AG04450 (cell line): ENCODE measurements at regions of chr1 and their contacts with region 1.

Region 1: DNA sequence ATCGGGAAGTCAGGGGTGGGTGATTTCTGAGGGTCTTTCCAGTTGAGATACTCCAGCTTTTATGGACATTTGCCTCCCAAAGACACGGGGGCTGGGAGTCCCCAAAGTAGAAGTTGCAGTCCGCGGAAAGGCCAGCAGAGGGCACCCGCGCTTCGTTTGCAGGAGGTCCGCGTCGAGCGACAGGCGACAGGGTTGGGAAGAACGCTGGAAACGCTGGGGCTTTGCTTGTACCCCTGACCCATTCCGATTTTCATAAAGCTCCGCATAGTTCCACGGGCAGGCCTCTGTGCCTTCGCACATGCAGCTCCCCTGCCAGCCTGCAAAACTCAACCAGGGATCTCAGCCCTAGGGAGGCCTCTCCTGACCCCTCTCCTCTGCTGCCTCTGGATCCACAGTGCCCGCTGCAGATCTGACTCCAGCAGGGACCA is 44.2 kb upstream of the LAPTM5 start:
- DNase-seq: no peak
- H3K4me3 ChIP-seq: no peak overlapping the region
- H3K27ac ChIP-seq: no peak overlapping the region
- H3K27me3 ChIP-seq: no peaks in the 10 kb centered on the region
- CTCF ChIP-seq: peak; percentile 97

Region 2: GRCh38 chr1:30779294-30780071 is 22.3 kb before region 1 on chr1:
- CTCF ChIA-PET with region 1: interaction called, 57 read pairs
- POLR2A ChIA-PET with region 1: no interaction called
- DNase-seq: no peak
- H3K4me3 ChIP-seq: no peak overlapping the region
- H3K27ac ChIP-seq: no peak overlapping the region
- H3K27me3 ChIP-seq: peaks cover 3% of the 10 kb centered on the region
- CTCF ChIP-seq: peak; percentile 89

Region 3: DNA sequence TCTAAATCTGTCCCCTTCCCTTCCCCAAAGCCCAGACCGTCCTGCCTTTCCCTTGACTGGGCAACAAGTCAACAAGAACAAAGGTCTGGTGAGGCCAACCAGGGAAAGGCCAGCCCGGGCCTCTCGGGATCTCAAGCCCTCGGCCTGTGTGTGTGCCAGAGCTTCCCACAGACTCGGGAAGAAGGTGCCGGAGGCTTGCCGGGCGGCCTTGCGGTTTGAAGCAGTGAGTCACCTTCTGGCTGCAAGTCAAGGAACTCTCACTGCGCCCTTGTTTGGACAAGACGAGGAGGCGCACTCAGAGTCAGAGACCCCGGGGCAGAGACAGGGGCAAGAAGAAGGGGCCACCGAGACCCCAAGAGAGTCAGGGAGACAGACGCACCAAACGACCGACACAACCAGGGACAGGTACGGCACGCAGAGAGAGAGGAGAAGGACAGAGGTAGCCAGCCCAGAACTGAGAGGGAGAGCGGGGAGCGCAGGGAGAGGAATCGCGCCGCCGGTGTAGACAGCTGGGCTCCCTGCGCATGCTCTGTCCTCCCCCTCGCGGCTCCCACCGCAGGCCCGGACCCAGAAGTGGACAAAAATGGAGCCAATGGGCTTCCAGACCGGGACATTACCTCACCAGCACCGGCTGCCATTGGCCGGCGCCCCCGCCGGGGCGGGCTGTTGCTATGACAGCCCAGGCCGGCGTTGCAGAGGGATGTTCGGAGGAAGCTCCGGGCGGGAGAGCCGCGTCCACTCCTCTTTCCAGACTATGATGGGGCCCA is 22.4 kb after region 1 on chr1:
- CTCF ChIA-PET with region 1: interaction called, 28 read pairs
- POLR2A ChIA-PET with region 1: interaction called, 4 read pairs
- DNase-seq: peak; percentile 99
- H3K4me3 ChIP-seq: peak overlapping the region; percentile 70
- H3K27ac ChIP-seq: peak overlapping the region; percentile 99
- H3K27me3 ChIP-seq: no peaks in the 10 kb centered on the region
- CTCF ChIP-seq: no peak

Region 4: GRCh38 chr1:30853350-30853749 is 51.6 kb after region 1 on chr1:
- CTCF ChIA-PET with region 1: interaction called, 22 read pairs
- POLR2A ChIA-PET with region 1: no interaction called
- DNase-seq: no peak
- H3K4me3 ChIP-seq: no peak overlapping the region
- H3K27ac ChIP-seq: peak overlapping the region; percentile 11
- H3K27me3 ChIP-seq: peaks cover 3% of the 10 kb centered on the region
- CTCF ChIP-seq: no peak

Region 5: DNA sequence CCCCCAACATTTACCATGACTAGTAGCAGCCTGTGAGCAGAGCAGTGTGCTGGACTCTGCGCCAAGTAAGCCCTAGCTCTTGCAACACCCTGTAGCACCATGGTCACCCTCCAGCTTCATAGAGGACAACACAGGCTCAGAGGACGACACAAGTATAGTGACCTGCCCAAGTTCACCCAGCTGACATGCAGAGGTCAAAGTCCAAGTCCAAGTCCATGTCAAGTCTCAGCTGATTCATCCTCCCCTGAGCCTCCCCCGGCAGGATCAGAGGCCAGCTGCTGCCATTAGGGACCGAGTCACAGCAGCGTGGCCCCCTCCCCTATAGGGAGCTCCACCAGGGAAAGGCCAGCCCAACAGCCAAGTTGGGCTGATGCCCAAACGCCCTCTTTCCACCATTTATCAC is 90.9 kb after region 1 on chr1:
- CTCF ChIA-PET with region 1: interaction called, 14 read pairs
- POLR2A ChIA-PET with region 1: no interaction called
- DNase-seq: no peak
- H3K4me3 ChIP-seq: no peak overlapping the region
- H3K27ac ChIP-seq: no peak overlapping the region
- H3K27me3 ChIP-seq: no peaks in the 10 kb centered on the region
- CTCF ChIP-seq: no peak

Region 6: GRCh38 chr1:30929135-30929889 is 127.5 kb after region 1 on chr1:
- CTCF ChIA-PET with region 1: interaction called, 78 read pairs
- POLR2A ChIA-PET with region 1: no interaction called
- DNase-seq: no peak
- H3K4me3 ChIP-seq: no peak overlapping the region
- H3K27ac ChIP-seq: no peak overlapping the region
- H3K27me3 ChIP-seq: no peaks in the 10 kb centered on the region
- CTCF ChIP-seq: peak; percentile 77